ENCODE measurements at regions of chr10 and their contacts with region 1.

Region 1: DNA sequence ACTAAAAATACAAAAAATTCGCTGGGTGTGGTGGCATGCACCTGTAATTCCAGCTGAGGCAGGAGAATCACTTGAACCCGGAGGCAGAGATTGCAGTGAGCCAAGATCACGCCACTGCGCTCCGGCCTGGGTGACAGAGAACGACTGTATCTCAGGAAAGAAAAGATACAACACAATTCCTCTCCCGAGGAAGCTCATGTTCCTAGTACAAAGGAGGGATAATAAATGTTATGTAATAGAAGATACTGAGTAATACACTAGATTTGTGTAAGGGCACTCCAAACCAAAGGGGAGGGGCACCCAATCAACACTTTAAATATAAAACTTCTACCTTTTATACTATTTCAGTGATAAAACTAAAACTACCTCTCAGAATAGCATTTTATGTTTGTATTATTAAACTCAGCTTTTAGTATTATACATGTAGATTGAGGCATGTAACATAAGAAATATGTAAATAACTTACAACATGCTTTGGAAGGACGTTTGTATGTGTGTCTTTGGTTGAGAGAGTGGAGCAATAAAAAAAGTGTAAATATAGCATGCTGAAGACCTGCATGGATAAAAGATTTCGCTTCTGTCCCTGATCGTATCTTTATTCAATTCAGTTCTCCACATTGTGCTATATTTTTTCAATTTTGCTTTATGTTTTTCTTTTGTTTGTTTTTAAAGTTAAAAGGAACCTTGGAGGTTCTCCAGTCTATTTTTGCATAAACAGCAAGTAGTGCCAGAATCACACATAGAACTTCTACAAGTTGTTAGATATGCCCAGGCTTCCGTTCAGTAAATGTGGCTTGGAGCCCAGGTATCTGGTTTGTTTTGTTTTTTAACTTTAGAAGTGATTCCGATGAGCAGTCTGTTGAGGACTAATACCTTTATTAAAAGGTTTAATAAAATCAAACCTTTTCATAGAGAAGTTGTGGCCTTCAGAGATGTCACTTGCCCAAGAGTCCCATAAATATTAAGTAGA is 71.9 kb downstream of the WAC start:
- DNase-seq: no peak
- ATAC-seq: no peak
- H3K4me3 ChIP-seq: no peak overlapping the region
- H3K4me3 Mint-ChIP-seq: no peak overlapping the region
- H3K27ac ChIP-seq: no peak overlapping the region
- H3K27ac Mint-ChIP-seq: no peak overlapping the region
- H3K4me1 ChIP-seq: peaks cover 0 to 3% of the 10 kb centered on the region in 2 donors
- H3K4me1 Mint-ChIP-seq: peaks cover 23% of the 10 kb centered on the region
- H3K27me3 ChIP-seq: no peaks in the 10 kb centered on the region
- H3K27me3 Mint-ChIP-seq: no peaks in the 10 kb centered on the region
- CTCF ChIP-seq: no peak

Region 2: DNA sequence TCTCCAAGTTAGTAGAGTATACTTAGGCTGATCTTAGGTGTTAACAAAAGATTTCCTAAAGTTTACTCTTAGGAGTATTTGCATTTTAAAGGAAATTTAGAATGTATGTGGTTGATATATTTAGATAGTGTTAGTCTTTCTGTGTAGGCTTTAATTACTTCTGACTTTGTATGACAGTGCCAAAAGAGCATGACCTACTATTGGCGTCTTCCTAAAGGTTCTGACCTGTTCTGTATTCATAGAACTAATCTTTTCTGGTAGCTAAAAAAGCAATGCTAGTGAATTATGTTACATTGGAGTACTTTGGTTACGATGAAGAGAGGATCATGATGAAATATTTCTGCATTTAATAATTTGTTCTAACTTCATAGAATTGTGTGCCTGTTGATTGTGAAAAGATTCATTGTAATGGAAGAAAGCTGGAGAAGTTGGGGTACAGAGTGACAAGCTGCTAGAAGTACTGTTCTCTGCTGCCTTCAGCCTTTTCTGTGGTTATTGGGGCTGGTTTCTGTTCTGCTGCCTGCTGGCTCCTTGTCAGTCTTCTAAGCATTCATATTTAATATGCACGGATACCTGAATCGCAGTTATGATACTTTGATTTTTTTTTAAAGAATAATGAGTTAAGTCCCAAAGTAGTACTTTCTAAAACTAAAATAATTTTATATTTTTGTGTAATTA is 58.7 kb before region 1 on chr10:
- CTCF ChIA-PET with region 1: no interaction called
- POLR2A ChIA-PET with region 1: no interaction called
- intact Hi-C with region 1: loop called (anchors 5 kb)
- DNase-seq: no peak
- ATAC-seq: no peak
- H3K4me3 ChIP-seq: no peak overlapping the region
- H3K4me3 Mint-ChIP-seq: no peak overlapping the region
- H3K27ac ChIP-seq: peak overlapping the region in 1 of 2 donors; percentile 20
- H3K27ac Mint-ChIP-seq: no peak overlapping the region
- H3K4me1 ChIP-seq: peaks cover 18 to 21% of the 10 kb centered on the region in 2 donors
- H3K4me1 Mint-ChIP-seq: peaks cover 57% of the 10 kb centered on the region
- H3K27me3 ChIP-seq: no peaks in the 10 kb centered on the region
- H3K27me3 Mint-ChIP-seq: no peaks in the 10 kb centered on the region
- CTCF ChIP-seq: no peak

Region 3: GRCh38 chr10:28587970-28588290 is 16.9 kb before region 1 on chr10:
- CTCF ChIA-PET with region 1: no interaction called
- POLR2A ChIA-PET with region 1: no interaction called
- intact Hi-C with region 1: loop called (anchors 2 kb)
- DNase-seq: no peak
- ATAC-seq: no peak
- H3K4me3 ChIP-seq: no peak overlapping the region
- H3K4me3 Mint-ChIP-seq: no peak overlapping the region
- H3K27ac ChIP-seq: no peak overlapping the region
- H3K27ac Mint-ChIP-seq: no peak overlapping the region
- H3K4me1 ChIP-seq: no peaks in the 10 kb centered on the region
- H3K4me1 Mint-ChIP-seq: peaks cover 5% of the 10 kb centered on the region
- H3K27me3 ChIP-seq: no peaks in the 10 kb centered on the region
- H3K27me3 Mint-ChIP-seq: no peaks in the 10 kb centered on the region
- CTCF ChIP-seq: no peak

Region 4: DNA sequence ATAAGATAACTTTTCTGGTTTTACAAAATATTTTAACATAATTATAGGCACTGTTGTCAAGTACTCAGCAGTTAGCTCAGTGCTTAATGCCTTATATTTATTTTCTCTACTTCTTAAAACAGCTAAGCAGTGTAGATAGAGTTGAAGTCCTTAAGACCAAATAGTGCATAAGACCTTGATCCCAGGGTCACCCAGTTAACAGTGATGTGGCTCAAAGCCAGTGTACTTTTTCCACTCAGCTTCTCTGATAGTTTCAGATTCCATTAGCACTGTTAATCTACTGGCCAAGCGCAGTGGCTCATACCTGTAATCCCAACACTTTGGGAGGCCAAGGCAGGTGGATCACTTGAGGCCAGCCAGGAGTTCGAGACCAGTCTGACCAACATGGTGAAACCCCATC is 11.7 kb after region 1 on chr10:
- CTCF ChIA-PET with region 1: no interaction called
- POLR2A ChIA-PET with region 1: no interaction called
- intact Hi-C with region 1: no loop called
- DNase-seq: no peak
- ATAC-seq: no peak
- H3K4me3 ChIP-seq: no peak overlapping the region
- H3K4me3 Mint-ChIP-seq: no peak overlapping the region
- H3K27ac ChIP-seq: no peak overlapping the region
- H3K27ac Mint-ChIP-seq: no peak overlapping the region
- H3K4me1 ChIP-seq: no peaks in the 10 kb centered on the region
- H3K4me1 Mint-ChIP-seq: no peaks in the 10 kb centered on the region
- H3K27me3 ChIP-seq: no peaks in the 10 kb centered on the region
- H3K27me3 Mint-ChIP-seq: no peaks in the 10 kb centered on the region
- CTCF ChIP-seq: no peak

Region 5: GRCh38 chr10:28628184-28628893 is 23.5 kb after region 1 on chr10:
- CTCF ChIA-PET with region 1: interaction called, 12 read pairs
- POLR2A ChIA-PET with region 1: no interaction called
- intact Hi-C with region 1: no loop called
- DNase-seq: peak; percentile 68
- ATAC-seq: peak; percentile 77
- H3K4me3 ChIP-seq: no peak overlapping the region
- H3K4me3 Mint-ChIP-seq: no peak overlapping the region
- H3K27ac ChIP-seq: no peak overlapping the region
- H3K27ac Mint-ChIP-seq: no peak overlapping the region
- H3K4me1 ChIP-seq: peaks cover 0 to 4% of the 10 kb centered on the region in 2 donors
- H3K4me1 Mint-ChIP-seq: peaks cover 5% of the 10 kb centered on the region
- H3K27me3 ChIP-seq: peaks cover 0 to 3% (median 0%) of the 10 kb centered on the region in 4 experiments
- H3K27me3 Mint-ChIP-seq: peaks cover 36% of the 10 kb centered on the region
- CTCF ChIP-seq: peak; percentile 90